AG04449 (cell line): ENCODE measurements at regions of chr6 and their contacts with region 1.

Region 1: DNA sequence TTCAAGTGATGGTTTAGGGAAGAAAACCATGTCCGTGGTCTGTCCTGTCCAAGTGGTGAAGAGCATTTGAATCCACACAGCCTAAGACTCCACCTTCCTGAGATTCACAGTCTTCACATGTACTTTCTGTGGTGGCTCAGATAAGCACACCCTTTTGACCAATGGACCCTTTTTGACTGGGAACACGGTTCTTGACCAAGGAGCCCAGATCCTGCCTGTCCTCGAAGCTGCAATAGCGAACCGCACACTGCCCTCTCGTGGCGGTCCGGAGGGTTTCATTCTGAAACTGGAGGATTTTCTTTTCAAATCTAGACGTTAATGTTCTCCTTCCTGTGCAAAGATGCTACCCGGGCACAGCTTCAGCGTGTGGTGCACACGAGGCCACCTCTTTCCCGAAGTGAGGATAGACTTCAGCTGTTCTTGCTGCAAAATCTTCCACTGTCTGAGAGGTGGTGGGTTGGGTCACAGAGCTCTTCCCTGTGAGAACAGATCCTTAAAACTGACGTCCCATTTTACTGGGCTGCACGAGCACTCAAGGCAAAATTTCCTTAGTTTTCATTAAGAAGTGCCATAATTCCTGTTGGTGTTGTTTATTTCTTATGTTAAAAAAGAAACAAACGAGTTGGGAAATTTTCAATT is 90.5 kb downstream of the SYNJ2 start:
- DNase-seq: no peak
- H3K4me3 ChIP-seq: no peak overlapping the region
- CTCF ChIP-seq: peak; percentile 75

Region 2: GRCh38 chr6:157756708-157757429 is 315.3 kb before region 1 on chr6:
- CTCF ChIA-PET with region 1: interaction called, 31 read pairs
- POLR2A ChIA-PET with region 1: no interaction called
- DNase-seq: no peak
- H3K4me3 ChIP-seq: no peak overlapping the region
- CTCF ChIP-seq: peak; percentile 85

Region 3: GRCh38 chr6:157937916-157938315 is 134.3 kb before region 1 on chr6:
- CTCF ChIA-PET with region 1: interaction called, 12 read pairs
- POLR2A ChIA-PET with region 1: no interaction called
- DNase-seq: no peak
- H3K4me3 ChIP-seq: no peak overlapping the region
- CTCF ChIP-seq: no peak

Region 4: DNA sequence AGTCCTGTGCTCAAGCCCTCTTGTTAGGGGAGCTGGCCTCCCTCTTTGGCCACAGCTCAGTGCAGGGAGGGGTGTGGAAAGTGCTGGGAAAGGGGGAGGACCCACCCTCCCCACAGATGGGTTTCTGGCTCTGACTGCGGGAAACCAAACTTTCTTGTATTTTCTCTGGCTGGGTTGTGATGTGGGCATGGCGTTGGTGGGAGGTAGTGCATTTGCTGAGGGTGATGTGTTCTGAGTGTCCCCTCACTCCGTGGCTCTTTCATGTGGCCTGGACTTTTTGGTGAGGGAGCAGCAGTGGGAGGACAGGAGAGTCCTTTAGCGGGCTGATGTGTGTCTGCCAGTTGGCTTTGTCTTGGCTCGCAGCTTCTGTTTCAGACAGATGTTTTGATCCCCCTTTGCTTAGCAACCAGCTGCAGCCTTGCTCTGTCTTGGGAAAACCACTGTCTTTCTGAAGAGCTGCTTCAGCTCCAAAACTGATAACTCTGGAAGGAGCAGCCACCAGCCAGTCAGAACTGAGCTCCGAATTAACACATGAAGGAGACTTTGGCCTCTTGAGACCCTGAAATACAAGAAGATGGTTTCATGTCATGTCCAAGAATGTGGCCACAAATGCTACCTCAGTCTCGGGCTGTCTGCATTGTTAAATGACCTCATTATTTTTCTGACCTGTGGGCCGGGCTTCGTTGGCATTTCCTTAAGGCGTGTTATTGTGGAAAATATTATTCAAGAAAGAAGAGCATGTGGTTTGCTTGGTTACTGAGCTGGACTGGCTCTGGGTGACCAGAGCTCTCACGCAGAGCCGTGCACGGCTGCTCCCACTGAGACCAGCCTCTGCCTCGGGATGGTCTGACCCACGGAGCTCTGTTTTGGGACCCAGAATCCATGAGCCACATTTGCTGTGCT is 69.0 kb before region 1 on chr6:
- CTCF ChIA-PET with region 1: interaction called, 12 read pairs
- POLR2A ChIA-PET with region 1: no interaction called
- DNase-seq: peak; percentile 61
- H3K4me3 ChIP-seq: peak overlapping the region; percentile 20
- CTCF ChIP-seq: no peak

Region 5: DNA sequence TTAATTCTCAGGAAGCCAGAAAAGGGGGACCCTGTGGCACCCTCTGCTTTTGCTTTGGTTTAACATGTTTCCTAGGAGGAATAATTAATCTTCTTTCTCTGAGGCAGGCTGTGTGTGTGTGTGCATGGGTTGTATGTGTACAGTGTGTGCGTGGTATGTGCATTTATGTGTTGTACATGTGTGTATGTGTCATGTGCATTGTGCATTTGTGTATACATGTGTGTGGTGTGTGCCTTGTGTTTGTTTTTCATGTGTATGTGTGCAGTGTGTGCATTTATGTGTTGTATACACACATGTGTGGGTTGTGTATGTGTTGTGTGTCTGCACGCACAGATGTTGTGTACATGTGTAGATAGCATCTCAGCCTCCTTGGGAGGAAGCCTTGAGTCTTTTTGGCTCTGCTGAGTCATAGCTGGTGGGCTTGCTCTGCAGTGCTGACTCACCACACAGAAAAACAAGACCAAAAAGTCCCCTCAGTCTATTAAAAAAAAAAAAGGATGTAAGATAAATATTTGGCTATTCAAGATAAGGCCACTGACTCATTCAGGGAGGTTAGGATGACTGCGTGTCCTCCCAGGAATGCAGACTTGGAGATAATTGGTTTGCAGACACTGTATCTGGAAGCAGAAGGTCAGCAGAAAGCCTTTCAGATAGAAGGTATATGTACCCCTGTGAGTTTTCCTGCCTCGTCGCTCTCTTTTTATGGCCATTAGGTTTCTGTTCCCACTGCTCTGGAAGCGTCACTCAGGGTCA is 32.0 kb before region 1 on chr6:
- CTCF ChIA-PET with region 1: interaction called, 11 read pairs
- POLR2A ChIA-PET with region 1: no interaction called
- DNase-seq: peak; percentile 95
- H3K4me3 ChIP-seq: peak overlapping the region; percentile 23; the same call in 1 of the 2 replicates
- CTCF ChIP-seq: no peak

Region 6: GRCh38 chr6:158086504-158087223 is 14.5 kb after region 1 on chr6:
- CTCF ChIA-PET with region 1: interaction called, 65 read pairs
- POLR2A ChIA-PET with region 1: interaction called, 3 read pairs
- DNase-seq: peak; percentile 65
- H3K4me3 ChIP-seq: no peak overlapping the region
- CTCF ChIP-seq: no peak

Region 7: GRCh38 chr6:158290659-158291058 is 218.5 kb after region 1 on chr6:
- CTCF ChIA-PET with region 1: no interaction called
- POLR2A ChIA-PET with region 1: no interaction called
- DNase-seq: no peak
- H3K4me3 ChIP-seq: no peak overlapping the region
- CTCF ChIP-seq: no peak